Tibial artery (tissue), 4 donors: ENCODE measurements at regions of chr6 and their contacts with region 1.

Region 1: DNA sequence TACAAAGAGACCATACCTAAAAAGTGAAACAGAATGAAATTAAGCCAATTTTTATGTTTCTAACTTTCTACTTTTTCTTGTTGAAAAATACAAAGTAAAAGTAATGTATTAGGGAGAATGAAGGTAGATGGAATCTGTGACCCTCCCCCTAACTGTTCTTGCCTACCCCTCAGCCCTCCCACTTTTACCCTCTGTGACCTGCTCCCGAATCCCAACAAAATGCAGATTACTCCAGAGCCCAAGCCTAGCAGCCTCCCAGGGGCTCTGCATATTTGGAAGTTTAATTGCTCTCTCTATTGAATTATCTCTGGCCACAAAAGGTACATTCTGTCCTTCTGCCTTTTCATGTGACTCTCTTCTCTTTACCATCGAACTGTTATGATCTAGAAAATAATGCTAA is 201.5 kb downstream of the PKHD1 start:
- DNase-seq: no peak
- H3K4me3 ChIP-seq: no peak overlapping the region
- H3K27ac ChIP-seq: no peak overlapping the region
- H3K4me1 ChIP-seq: no peaks in the 10 kb centered on the region
- H3K27me3 ChIP-seq: no peaks in the 10 kb centered on the region
- CTCF ChIP-seq: no peak

Region 2: GRCh38 chr6:51711876-51712275 is 174.1 kb before region 1 on chr6:
- intact Hi-C with region 1: no loop called
- DNase-seq: no peak
- H3K4me3 ChIP-seq: no peak overlapping the region
- H3K27ac ChIP-seq: no peak overlapping the region
- H3K4me1 ChIP-seq: peaks cover 0 to 3% (median 0%) of the 10 kb centered on the region in 4 donors
- H3K27me3 ChIP-seq: no peaks in the 10 kb centered on the region
- CTCF ChIP-seq: no peak

Region 3: DNA sequence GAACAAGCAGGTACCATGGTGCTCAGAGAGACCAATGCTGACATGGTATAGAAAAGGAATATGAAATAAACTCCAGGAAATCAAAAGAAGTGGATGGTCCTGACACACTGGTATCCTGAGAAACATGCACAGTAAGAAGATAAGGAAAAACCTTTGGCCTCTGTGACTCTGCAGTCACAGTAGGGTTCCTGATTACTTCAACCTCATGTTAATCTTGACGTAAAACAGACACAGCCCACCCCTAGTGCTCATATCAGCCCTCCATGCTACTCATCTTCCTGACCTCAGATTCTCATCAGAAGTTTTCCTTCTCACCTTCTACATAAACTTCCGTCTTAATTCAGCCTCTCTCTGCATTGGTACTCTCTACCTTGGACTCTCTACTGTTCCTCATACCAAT is 39.4 kb before region 1 on chr6:
- intact Hi-C with region 1: loop called (anchors 5 kb)
- DNase-seq: no peak
- H3K4me3 ChIP-seq: no peak overlapping the region
- H3K27ac ChIP-seq: no peak overlapping the region
- H3K4me1 ChIP-seq: no peaks in the 10 kb centered on the region
- H3K27me3 ChIP-seq: peaks cover 0 to 7% of the 10 kb centered on the region in 2 donors
- CTCF ChIP-seq: no peak